ENCODE measurements at regions of chr5 and their contacts with region 1.

Region 1: GRCh38 chr5:120703923-120704587 is 240.0 kb downstream of the PRR16 start:
- DNase-seq: no peak
- ATAC-seq: no peak

Region 2: GRCh38 chr5:120327180-120327579 is 376.9 kb before region 1 on chr5:
- intact Hi-C with region 1: loop called in 1 of 2 experiments (anchors 10 kb)
- DNase-seq: no peak
- ATAC-seq: no peak

Measured in left colon (tissue), 2 donors.